ENCODE measurements at regions of chr2 and their contacts with region 1.

Region 1: GRCh38 chr2:171018522-171018921 is 89.5 kb downstream of the GORASP2 start:
- DNase-seq: no peak
- ATAC-seq: no peak
- H3K4me3 ChIP-seq: no peak overlapping the region
- H3K4me3 Mint-ChIP-seq: no peak overlapping the region
- H3K27ac ChIP-seq: no peak overlapping the region
- H3K27ac Mint-ChIP-seq: no peak overlapping the region
- H3K4me1 ChIP-seq: no peaks in the 10 kb centered on the region
- H3K4me1 Mint-ChIP-seq: peaks cover 3% of the 10 kb centered on the region
- H3K27me3 ChIP-seq: no peaks in the 10 kb centered on the region
- H3K27me3 Mint-ChIP-seq: no peaks in the 10 kb centered on the region
- CTCF ChIP-seq: no peak

Region 2: DNA sequence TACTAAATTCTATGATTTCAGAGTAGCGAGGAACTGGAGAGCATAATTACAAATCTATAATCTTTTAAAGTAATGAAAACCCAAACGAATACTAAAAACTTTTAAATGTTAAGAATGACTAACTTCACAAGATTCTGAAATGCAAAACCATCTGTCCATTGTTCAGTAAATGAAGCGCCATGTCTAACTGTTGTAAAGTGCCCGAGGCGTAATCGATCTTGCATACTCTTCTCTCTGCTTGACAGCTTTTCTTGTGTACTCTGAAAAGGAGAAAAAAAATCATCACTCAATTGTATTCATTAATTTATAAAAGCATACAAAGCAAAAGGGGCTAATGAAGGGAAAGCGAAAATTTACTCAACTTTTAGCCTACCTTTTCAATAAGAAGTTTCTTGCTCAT is 31.2 kb after region 1 on chr2:
- CTCF ChIA-PET with region 1: no interaction called
- POLR2A ChIA-PET with region 1: no interaction called
- intact Hi-C with region 1: loop called (anchors 5 kb)
- DNase-seq: no peak
- ATAC-seq: no peak
- H3K4me3 ChIP-seq: no peak overlapping the region
- H3K4me3 Mint-ChIP-seq: no peak overlapping the region
- H3K27ac ChIP-seq: no peak overlapping the region
- H3K27ac Mint-ChIP-seq: no peak overlapping the region
- H3K4me1 ChIP-seq: no peaks in the 10 kb centered on the region
- H3K4me1 Mint-ChIP-seq: no peaks in the 10 kb centered on the region
- H3K27me3 ChIP-seq: no peaks in the 10 kb centered on the region
- H3K27me3 Mint-ChIP-seq: no peaks in the 10 kb centered on the region
- CTCF ChIP-seq: no peak

Region 3: GRCh38 chr2:171360905-171361304 is 342.4 kb after region 1 on chr2:
- CTCF ChIA-PET with region 1: no interaction called
- POLR2A ChIA-PET with region 1: no interaction called
- intact Hi-C with region 1: no loop called
- DNase-seq: no peak
- ATAC-seq: no peak
- H3K4me3 ChIP-seq: no peak overlapping the region
- H3K4me3 Mint-ChIP-seq: no peak overlapping the region
- H3K27ac ChIP-seq: no peak overlapping the region
- H3K27ac Mint-ChIP-seq: no peak overlapping the region
- H3K4me1 ChIP-seq: no peaks in the 10 kb centered on the region
- H3K4me1 Mint-ChIP-seq: no peaks in the 10 kb centered on the region
- H3K27me3 ChIP-seq: no peaks in the 10 kb centered on the region
- H3K27me3 Mint-ChIP-seq: no peaks in the 10 kb centered on the region
- CTCF ChIP-seq: no peak

Region 4: GRCh38 chr2:171798252-171798741 is 779.8 kb after region 1 on chr2:
- CTCF ChIA-PET with region 1: no interaction called
- POLR2A ChIA-PET with region 1: no interaction called
- intact Hi-C with region 1: no loop called
- DNase-seq: no peak
- ATAC-seq: no peak
- H3K4me3 ChIP-seq: no peak overlapping the region
- H3K4me3 Mint-ChIP-seq: no peak overlapping the region
- H3K27ac ChIP-seq: no peak overlapping the region
- H3K27ac Mint-ChIP-seq: no peak overlapping the region
- H3K4me1 ChIP-seq: no peaks in the 10 kb centered on the region
- H3K4me1 Mint-ChIP-seq: no peaks in the 10 kb centered on the region
- H3K27me3 ChIP-seq: no peaks in the 10 kb centered on the region
- H3K27me3 Mint-ChIP-seq: no peaks in the 10 kb centered on the region
- CTCF ChIP-seq: no peak